ENCODE measurements at regions of chr21 and their contacts with region 1.

Region 1: DNA sequence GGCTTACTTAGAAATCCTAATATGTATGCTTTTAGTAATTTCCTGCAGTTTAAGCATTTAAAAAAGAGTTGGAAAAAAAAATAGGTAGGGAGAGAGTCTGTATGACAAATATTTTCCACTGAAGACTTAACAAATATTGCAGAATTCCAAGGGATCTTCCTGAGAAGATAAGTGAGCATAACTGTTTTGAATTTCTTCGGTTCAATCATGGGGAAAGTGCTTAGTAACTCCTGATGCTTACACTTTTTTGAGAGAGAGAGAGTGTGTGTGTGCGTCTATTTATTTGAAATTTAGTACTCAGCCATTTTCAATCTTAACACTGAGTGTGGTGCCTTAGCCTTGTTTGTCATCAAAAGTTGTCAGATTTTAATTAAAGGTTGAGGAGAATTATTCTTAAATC is 18.5 kb downstream of the SON start:
- DNase-seq: no peak
- ATAC-seq: no peak
- H3K4me3 ChIP-seq: no peak overlapping the region
- H3K27ac ChIP-seq: no peak overlapping the region
- H3K4me1 ChIP-seq: no peaks in the 10 kb centered on the region
- H3K27me3 ChIP-seq: no peaks in the 10 kb centered on the region
- CTCF ChIP-seq: no peak
- EP300 ChIP-seq: no peak
- POLR2A ChIP-seq: peak; percentile 43; the same call in 1 of the 2 replicates
- RAD21 ChIP-seq: no peak

Region 2: GRCh38 chr21:33588485-33589335 is 27.3 kb after region 1 on chr21 and contains the start of gene DONSON:
- CTCF ChIA-PET with region 1: no interaction called
- POLR2A ChIA-PET with region 1: interaction called, 10 read pairs
- in situ Hi-C with region 1: no loop called
- intact Hi-C with region 1: no loop called
- DNase-seq: peak; percentile 93 to 100 (median 100)
- ATAC-seq: peak; percentile 92
- H3K4me3 ChIP-seq: peak within 1 kb of the TSS; percentile 89
- H3K27ac ChIP-seq: peak within 1 kb of the TSS; percentile 53
- H3K4me1 ChIP-seq: peaks cover 13 to 24% of the 10 kb centered on the region in 2 experiments; a peak in 4 of 5 replicates
- H3K27me3 ChIP-seq: no peaks in the 10 kb centered on the region
- CTCF ChIP-seq: no peak; a peak in 1 of 6 replicates
- EP300 ChIP-seq: no peak
- POLR2A ChIP-seq: peak; percentile 85
- RAD21 ChIP-seq: no peak
- polyA plus RNA-seq, gene DONSON: 26.7 to 30.6 TPM

Region 3: DNA sequence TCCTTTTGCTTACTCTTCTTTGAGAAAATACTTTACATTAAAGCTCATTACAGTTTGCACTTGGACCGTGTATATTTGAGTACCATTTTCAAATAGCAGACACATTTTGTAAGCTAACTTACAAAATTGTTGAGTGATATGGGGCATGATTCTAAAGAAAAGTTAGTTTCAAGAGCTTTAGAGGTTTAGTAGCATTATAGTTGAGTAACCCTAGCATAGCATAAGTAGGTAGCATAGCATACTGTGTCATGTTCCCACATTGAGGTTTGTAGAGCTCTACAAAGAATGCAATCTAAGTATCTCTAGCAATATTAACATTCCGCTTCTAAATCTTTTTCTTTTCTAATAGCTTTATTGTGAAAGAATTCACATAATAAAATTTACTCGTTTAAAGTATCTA is 172.9 kb after region 1 on chr21:
- CTCF ChIA-PET with region 1: no interaction called
- POLR2A ChIA-PET with region 1: no interaction called
- in situ Hi-C with region 1: no loop called
- intact Hi-C with region 1: no loop called
- DNase-seq: no peak
- ATAC-seq: no peak
- H3K4me3 ChIP-seq: no peak overlapping the region
- H3K27ac ChIP-seq: no peak overlapping the region
- H3K4me1 ChIP-seq: peaks cover 0 to 3% of the 10 kb centered on the region in 2 experiments; a peak in 1 of 5 replicates
- H3K27me3 ChIP-seq: no peaks in the 10 kb centered on the region
- CTCF ChIP-seq: no peak
- EP300 ChIP-seq: no peak
- POLR2A ChIP-seq: no peak
- RAD21 ChIP-seq: no peak